Activated CD8-positive, alpha-beta T cell treated with anti-CD3 and anti-CD28 coated beads for 36 hours (primary cell): ENCODE measurements at regions of chr1 and their contacts with region 1.

Region 1: GRCh38 chr1:44799770-44800584 is at the start of gene PLK3:
- DNase-seq: peak; percentile 99
- ATAC-seq: peak; percentile 90
- H3K4me3 Mint-ChIP-seq: peak within 1 kb of the TSS; percentile 84
- H3K27ac Mint-ChIP-seq: peak within 1 kb of the TSS; percentile 100
- H3K4me1 Mint-ChIP-seq: peaks cover 35% of the 10 kb centered on the region
- H3K27me3 Mint-ChIP-seq: no peaks in the 10 kb centered on the region
- CTCF ChIP-seq: peak; percentile 76
- total RNA-seq, gene PLK3: 36.4 to 36.6 TPM

Region 2: GRCh38 chr1:44640200-44640853 is 159.7 kb before region 1 on chr1:
- CTCF ChIA-PET with region 1: no interaction called
- POLR2A ChIA-PET with region 1: no interaction called
- intact Hi-C with region 1: no loop called
- DNase-seq: no peak
- ATAC-seq: no peak
- H3K4me3 Mint-ChIP-seq: no peak overlapping the region
- H3K27ac Mint-ChIP-seq: no peak overlapping the region
- H3K4me1 Mint-ChIP-seq: peaks cover 7% of the 10 kb centered on the region
- H3K27me3 Mint-ChIP-seq: no peaks in the 10 kb centered on the region
- CTCF ChIP-seq: no peak

Region 3: DNA sequence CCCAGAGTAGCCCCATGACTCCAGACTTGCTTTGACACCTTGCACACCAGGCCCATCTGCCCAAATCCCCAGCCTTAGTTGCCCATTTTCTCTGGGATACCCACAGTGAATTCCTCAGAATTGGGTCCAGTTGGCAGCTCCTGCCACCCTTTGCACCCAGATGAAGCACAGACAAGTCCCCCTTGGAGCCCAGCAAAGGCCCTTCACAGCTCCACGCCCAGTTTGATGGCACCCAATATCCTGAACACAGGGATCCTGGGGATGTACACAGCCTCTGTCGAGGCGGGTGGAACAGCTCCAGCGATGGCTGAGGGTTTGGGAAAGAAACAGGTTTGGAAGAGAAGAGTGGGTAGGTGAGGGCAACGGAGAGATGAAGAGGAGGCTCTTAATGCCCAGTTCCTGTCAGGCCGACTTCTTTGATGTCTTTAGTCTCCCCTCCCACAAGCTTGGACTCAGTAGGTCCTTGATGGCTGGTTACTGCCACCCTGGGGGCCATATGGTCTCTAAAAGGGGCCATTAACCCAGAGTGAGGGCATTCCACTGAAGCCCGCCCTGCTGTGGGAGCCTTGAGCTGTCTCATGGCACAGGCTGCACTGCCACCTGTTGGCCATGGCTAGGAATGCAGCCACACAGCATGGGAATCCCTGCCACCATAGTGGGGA is 147.4 kb before region 1 on chr1:
- CTCF ChIA-PET with region 1: no interaction called
- POLR2A ChIA-PET with region 1: no interaction called
- intact Hi-C with region 1: no loop called
- DNase-seq: peak; percentile 84
- ATAC-seq: peak; percentile 98
- H3K4me3 Mint-ChIP-seq: no peak overlapping the region
- H3K27ac Mint-ChIP-seq: no peak overlapping the region
- H3K4me1 Mint-ChIP-seq: no peaks in the 10 kb centered on the region
- H3K27me3 Mint-ChIP-seq: no peaks in the 10 kb centered on the region
- CTCF ChIP-seq: peak; percentile 85

Region 4: DNA sequence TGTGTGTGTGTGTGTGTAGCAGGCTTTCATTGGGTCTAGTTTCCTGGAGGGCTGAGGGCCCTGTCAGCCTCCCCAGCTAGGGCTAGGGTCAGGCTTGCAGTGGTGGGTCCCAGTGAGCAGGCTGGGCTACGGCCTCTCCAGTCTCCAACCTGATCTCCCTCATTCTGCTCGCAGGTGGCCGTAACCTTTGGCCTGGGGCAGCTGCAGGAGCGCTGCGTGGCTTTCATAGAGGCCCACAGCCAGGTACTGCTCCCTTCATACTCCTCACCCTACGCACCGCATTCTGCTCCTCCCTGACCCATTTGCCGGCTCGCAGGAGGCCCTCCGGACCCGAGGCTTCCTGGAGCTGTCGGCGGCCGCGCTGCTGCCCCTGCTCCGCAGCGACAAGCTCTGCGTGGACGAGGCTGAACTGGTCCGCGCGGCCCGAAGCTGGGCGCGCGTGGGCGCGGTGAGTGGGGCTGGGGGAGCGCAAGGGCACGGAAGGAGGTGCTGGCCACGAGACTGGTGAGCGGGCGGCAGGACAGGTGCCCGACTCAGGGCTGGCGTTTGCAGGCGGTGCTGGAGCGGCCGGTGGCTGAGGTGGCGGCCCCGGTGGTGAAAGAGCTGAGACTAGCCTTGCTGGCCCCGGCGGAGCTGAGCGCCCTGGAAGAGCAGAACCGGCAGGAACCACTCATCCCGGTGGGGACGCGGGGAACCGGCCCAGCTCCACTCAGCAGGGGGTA is 13.0 kb after region 1 on chr1:
- CTCF ChIA-PET with region 1: interaction called, 51 read pairs
- POLR2A ChIA-PET with region 1: interaction called, 214 read pairs
- intact Hi-C with region 1: no loop called
- DNase-seq: peak; percentile 4
- ATAC-seq: no peak
- H3K4me3 Mint-ChIP-seq: peak overlapping the region; percentile 24
- H3K27ac Mint-ChIP-seq: peak overlapping the region; percentile 99
- H3K4me1 Mint-ChIP-seq: peaks cover 60% of the 10 kb centered on the region
- H3K27me3 Mint-ChIP-seq: no peaks in the 10 kb centered on the region
- CTCF ChIP-seq: no peak

Region 5: GRCh38 chr1:44842862-44843655 is 43.1 kb after region 1 on chr1 and contains the start of gene PTCH2:
- CTCF ChIA-PET with region 1: no interaction called
- POLR2A ChIA-PET with region 1: no interaction called
- intact Hi-C with region 1: no loop called
- DNase-seq: peak; percentile 48
- ATAC-seq: peak; percentile 83
- H3K4me3 Mint-ChIP-seq: peak within 1 kb of the TSS; percentile 43
- H3K27ac Mint-ChIP-seq: no peak within 1 kb of the TSS
- H3K4me1 Mint-ChIP-seq: peaks cover 4% of the 10 kb centered on the region
- H3K27me3 Mint-ChIP-seq: peaks cover 7% of the 10 kb centered on the region
- CTCF ChIP-seq: no peak
- total RNA-seq, gene PTCH2: 0.13 to 0.97 TPM